CD8-positive, alpha-beta T cell (primary cell): ENCODE measurements at regions of chr7 and their contacts with region 1.

Region 1: GRCh38 chr7:27172823-27173510 is 1.2 kb downstream of the HOXA10 start:
- DNase-seq: peak in 1 of 9 experiments; percentile 56
- ATAC-seq: peak; percentile 34
- H3K4me3 ChIP-seq: peak overlapping the region; percentile 27 to 45
- H3K4me3 Mint-ChIP-seq: peak overlapping the region; percentile 47
- H3K27ac ChIP-seq: no peak overlapping the region
- H3K27ac Mint-ChIP-seq: no peak overlapping the region
- H3K4me1 ChIP-seq: peaks cover 34% of the 10 kb centered on the region
- H3K4me1 Mint-ChIP-seq: peaks cover 31% of the 10 kb centered on the region
- H3K27me3 ChIP-seq: peaks cover 58 to 65% of the 10 kb centered on the region in 2 experiments
- H3K27me3 Mint-ChIP-seq: peaks cover 62% of the 10 kb centered on the region
- CTCF ChIP-seq: no peak

Region 2: DNA sequence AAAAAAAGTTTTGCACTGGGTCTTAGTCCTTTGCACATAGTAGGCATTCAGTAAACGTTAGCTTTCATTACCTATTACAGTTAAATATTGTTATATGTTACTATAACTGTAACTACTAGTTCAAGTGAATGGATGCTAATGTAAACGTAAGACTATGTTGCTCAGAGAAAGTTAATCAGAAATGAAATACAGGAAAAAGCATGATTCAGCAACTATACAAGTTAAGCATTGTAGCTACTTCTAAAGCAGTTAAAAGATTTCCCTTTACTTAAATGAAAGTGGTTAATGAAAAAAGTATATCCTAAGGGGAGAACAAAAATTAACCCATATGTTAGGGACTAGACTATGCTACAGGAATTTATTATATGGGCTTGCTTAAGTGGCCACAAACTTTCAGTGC is 429.8 kb before region 1 on chr7:
- CTCF ChIA-PET with region 1: no interaction called
- POLR2A ChIA-PET with region 1: no interaction called
- intact Hi-C with region 1: no loop called
- DNase-seq: no peak
- ATAC-seq: no peak
- H3K4me3 ChIP-seq: no peak overlapping the region
- H3K4me3 Mint-ChIP-seq: no peak overlapping the region
- H3K27ac ChIP-seq: no peak overlapping the region
- H3K27ac Mint-ChIP-seq: no peak overlapping the region
- H3K4me1 ChIP-seq: no peaks in the 10 kb centered on the region
- H3K4me1 Mint-ChIP-seq: no peaks in the 10 kb centered on the region
- H3K27me3 ChIP-seq: no peaks in the 10 kb centered on the region
- H3K27me3 Mint-ChIP-seq: peaks cover 2% of the 10 kb centered on the region
- CTCF ChIP-seq: no peak

Region 3: DNA sequence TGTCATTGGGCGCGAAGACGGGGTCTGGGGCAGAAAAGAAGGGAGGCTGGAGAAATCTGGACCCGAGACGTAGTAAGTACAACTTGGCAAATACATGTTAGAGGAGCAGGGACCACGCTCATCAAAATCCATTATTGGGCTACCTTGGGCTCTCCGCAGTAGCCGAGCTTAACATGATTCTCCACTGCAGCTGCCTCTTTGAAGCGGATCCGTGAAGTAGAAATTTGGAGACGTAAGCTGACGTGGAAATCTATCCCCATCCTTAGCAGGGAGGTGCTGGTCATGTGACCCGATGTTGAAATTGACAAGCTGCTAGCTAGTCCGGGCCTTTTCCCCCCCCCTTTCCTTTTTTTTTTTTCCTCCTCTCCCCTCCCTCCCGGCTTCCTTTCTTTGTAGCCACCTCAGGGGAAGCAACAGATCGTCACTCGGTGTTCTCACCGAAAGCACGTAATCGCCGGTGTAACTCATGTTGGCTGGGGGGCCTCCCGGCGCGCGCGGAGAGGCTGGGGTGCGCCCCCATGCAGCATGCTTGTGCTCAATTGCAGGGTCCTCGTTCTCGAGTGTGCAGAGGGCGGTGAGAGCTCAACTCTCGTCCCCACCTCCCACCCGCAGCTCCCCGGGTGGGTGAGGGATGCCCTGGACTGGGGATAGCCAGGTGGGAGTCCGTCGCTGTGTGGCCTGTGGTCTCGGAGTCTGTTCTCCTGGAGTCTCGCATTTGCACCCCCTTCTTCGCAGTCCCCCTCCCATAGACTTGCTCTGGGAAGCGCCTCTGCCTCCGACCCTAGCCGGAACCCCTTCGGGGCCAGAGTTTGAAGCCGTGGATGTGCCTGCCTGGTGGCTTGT is 12.3 kb after region 1 on chr7 and contains the start of gene HOXA11:
- CTCF ChIA-PET with region 1: interaction called, 17 read pairs
- POLR2A ChIA-PET with region 1: interaction called, 7 read pairs
- intact Hi-C with region 1: loop called (anchors 1 to 2 kb)
- DNase-seq: peak in 2 of 9 experiments; percentile 56 to 58
- ATAC-seq: peak; percentile 34
- H3K4me3 ChIP-seq: peak within 1 kb of the TSS; percentile 40 to 42
- H3K4me3 Mint-ChIP-seq: peak within 1 kb of the TSS; percentile 76
- H3K27ac ChIP-seq: no peak within 1 kb of the TSS
- H3K27ac Mint-ChIP-seq: no peak within 1 kb of the TSS
- H3K4me1 ChIP-seq: peaks cover 56% of the 10 kb centered on the region
- H3K4me1 Mint-ChIP-seq: peaks cover 57% of the 10 kb centered on the region
- H3K27me3 ChIP-seq: peaks cover 85 to 89% of the 10 kb centered on the region in 2 experiments
- H3K27me3 Mint-ChIP-seq: peaks cover 80% of the 10 kb centered on the region
- CTCF ChIP-seq: no peak
- total RNA-seq, gene HOXA11: not detected

Region 4: DNA sequence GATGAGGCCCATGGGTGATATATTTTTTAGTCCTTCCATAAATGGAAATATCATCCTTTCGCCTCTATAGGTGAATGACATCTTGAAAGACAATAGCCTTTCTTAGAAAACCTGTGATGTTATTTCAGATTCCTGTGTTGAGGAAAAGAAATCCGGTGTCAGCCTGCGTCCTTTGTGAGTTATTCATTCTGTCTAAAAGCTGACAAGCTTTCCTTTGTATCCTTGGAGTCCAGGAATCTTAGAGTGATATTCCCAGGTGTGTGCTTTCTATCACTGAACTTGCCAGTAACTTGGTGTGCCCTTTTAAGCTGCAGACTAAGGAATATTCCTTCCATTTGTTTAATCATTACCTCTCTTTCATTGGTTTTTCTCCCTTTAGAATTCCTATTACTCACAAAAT is 110.6 kb after region 1 on chr7:
- CTCF ChIA-PET with region 1: no interaction called
- POLR2A ChIA-PET with region 1: no interaction called
- intact Hi-C with region 1: no loop called
- DNase-seq: no peak
- ATAC-seq: no peak
- H3K4me3 ChIP-seq: no peak overlapping the region
- H3K4me3 Mint-ChIP-seq: no peak overlapping the region
- H3K27ac ChIP-seq: no peak overlapping the region
- H3K27ac Mint-ChIP-seq: no peak overlapping the region
- H3K4me1 ChIP-seq: no peaks in the 10 kb centered on the region
- H3K4me1 Mint-ChIP-seq: no peaks in the 10 kb centered on the region
- H3K27me3 ChIP-seq: no peaks in the 10 kb centered on the region
- H3K27me3 Mint-ChIP-seq: peaks cover 20% of the 10 kb centered on the region
- CTCF ChIP-seq: no peak